CD8-positive, alpha-beta T cell (primary cell): ENCODE measurements at regions of chr7 and their contacts with region 1.

Region 1: DNA sequence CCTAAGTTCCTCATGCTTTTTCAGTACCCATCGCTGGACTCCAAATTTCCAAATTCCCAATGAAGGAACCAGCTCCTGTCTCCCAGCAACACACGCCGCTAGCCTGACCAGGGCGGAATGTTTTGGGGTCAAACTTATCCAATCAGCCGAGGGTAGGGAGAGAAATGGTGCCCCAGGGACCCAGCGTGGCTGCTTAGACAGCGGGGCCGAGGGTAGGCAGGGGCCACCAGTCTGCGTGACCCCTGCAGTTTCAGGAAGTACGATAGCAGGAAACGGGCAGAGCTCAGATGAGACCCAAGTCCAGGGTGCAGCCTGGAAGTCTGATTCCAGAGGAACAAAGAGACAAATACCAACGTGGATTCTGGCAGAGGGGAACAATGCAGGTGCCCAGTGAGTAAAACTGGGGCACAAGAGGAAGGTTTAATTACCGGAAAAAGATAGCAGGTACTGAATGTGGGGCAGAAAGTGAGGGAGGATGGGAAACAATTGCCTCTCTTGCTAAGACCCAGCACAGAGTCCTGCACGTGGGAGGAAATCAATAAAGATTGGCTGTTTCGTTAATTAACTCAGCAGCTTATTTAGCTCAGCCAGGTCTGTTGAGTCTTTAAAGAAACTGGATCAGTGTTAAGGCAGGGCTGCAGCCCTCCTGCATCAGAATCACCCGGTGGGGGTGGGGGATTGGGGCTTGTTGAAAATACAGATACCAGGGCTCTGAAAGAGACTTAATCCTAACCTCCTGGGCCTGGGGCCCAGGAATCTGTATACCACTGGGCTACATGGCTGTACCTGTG is 50.4 kb upstream of the NFE2L3 start:
- DNase-seq: peak in 1 of 9 experiments; percentile 27
- ATAC-seq: no peak
- H3K4me3 ChIP-seq: no peak overlapping the region
- H3K4me3 Mint-ChIP-seq: peak overlapping the region; percentile 71
- H3K27ac ChIP-seq: no peak overlapping the region
- H3K27ac Mint-ChIP-seq: peak overlapping the region; percentile 83
- H3K4me1 ChIP-seq: peaks cover 40% of the 10 kb centered on the region
- H3K4me1 Mint-ChIP-seq: peaks cover 52% of the 10 kb centered on the region
- H3K27me3 ChIP-seq: no peaks in the 10 kb centered on the region
- H3K27me3 Mint-ChIP-seq: no peaks in the 10 kb centered on the region
- CTCF ChIP-seq: no peak

Region 2: DNA sequence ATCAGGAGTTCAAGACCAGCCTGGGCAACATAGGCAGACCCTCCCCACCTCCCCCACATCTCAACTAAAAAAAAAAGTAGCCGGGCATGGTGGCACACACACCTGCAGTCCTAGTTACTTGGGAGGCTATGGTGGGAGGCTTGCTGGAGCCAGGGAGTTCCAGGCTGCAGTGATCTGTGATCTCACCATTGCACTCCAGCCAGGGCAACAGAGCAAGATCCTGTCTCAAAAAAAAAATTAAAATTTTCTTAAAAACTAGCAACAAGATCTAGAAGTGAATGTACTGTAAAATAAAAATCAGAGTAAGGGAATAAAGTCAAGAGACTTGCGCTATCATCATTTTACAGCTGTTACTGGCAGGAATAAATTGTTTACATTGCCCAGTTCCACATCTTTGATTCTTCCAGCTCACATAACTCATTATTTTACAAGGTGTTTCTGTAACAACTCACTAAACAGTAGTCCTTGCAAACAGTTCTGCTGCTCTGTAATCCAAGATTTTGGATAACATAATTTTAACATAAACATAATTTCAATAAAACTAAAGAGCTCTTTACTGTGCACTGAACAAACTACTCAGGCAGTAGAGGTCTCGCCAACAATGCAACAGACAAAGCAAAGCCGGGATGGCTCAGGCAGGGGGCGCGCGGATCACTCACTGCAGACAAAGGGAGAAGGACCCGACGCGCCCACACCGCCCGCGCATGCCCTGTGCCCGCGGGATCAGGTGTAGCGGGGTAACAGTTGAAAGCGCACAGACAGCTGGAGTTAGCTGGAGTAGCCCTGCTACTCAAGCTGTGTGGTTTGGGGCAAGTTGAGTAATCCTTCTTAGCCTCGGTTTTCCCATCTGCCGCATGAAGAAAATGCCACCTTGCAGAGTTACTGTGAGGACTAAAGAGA is 22.9 kb before region 1 on chr7:
- CTCF ChIA-PET with region 1: interaction called, 6 read pairs
- POLR2A ChIA-PET with region 1: no interaction called
- intact Hi-C with region 1: loop called in 1 of 2 experiments (anchors 2 kb)
- DNase-seq: peak; percentile 65 to 88 (median 81)
- ATAC-seq: peak; percentile 100
- H3K4me3 ChIP-seq: peak overlapping the region in 1 of 2 experiments; percentile 18
- H3K4me3 Mint-ChIP-seq: no peak overlapping the region
- H3K27ac ChIP-seq: no peak overlapping the region
- H3K27ac Mint-ChIP-seq: no peak overlapping the region
- H3K4me1 ChIP-seq: peaks cover 4% of the 10 kb centered on the region
- H3K4me1 Mint-ChIP-seq: peaks cover 6% of the 10 kb centered on the region
- H3K27me3 ChIP-seq: peaks cover 0 to 8% of the 10 kb centered on the region in 2 experiments
- H3K27me3 Mint-ChIP-seq: peaks cover 19% of the 10 kb centered on the region
- CTCF ChIP-seq: peak; percentile 80